Activated naive CD8-positive, alpha-beta T cell treated with anti-CD3 and anti-CD28 coated beads, Interleukin-2, amount 10 ng/mL, durations not matched to agents 7 days and 5 days (primary cell): ENCODE measurements at regions of chr5 and their contacts with region 1.

Region 1: DNA sequence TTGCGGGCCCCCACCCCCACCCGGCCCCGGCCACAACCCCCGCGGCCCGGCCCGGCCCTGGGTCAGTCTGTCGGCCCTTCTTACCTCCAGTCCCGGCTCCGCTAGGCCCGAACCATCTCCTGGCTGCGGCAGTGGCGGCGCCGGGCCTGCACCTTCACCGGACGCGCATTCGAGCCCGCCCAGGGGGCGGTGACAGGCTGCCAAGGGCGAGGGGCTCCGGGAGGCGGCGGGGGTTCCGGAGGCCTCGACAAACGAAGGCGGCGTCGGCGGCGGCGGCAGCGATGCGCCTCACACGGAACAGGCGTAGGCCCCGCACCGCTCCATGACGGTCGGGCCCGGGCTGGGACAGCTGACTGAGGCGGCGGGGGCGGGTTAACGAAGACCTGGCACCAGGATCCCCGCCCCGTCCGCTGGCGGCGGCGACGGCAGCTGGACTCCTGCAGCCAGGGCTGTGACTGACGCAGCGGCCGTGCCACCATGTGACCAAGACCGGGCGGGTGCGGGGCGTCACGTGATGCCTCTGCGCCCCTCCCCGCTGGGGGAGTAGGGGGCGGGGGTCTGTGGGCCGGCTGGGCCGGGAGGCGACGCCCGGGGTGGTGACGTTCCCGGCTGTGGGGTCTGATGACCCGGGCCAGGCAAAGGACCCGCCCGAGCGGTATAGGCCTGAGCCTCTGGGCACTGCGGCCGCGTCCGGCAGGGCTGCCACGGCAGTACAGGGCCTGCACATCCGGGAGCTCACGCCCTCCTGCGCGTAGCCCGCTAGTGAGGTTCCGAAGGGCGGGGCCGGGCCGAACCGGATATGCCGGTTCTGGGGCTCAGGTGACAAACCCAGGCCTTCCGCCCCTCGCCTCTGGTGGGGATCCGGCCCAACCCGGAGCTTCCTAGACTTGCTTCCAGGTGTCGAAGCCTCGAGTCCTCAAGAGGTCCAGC is at the start of gene AFF4:
- DNase-seq: peak; percentile 90
- ATAC-seq: peak; percentile 91
- H3K4me3 Mint-ChIP-seq: peak within 1 kb of the TSS; percentile 97
- H3K27ac Mint-ChIP-seq: peak within 1 kb of the TSS; percentile 96
- H3K4me1 Mint-ChIP-seq: peaks cover 22% of the 10 kb centered on the region
- H3K27me3 Mint-ChIP-seq: no peaks in the 10 kb centered on the region
- total RNA-seq, gene AFF4: 40.3 to 42.1 TPM

Region 2: DNA sequence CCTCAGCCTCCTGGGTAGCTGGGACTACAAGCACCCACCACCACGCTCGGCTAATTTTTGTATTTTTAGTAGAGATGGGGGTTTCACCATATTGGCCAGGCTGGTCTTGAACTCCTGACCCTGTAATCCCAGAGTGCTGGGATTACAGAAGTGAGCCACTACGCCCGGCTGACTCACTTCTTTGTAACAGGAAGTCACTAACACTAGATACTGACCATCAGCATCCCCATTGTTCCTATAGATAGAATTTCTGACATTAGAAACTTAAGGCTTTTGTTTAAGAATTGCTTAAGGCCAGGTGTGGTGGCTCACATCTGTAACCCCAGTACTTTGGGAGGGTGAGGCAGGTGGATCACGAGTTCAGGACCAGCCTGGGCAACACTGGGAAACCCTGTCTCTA is 47.8 kb before region 1 on chr5:
- POLR2A ChIA-PET with region 1: no interaction called
- DNase-seq: no peak
- ATAC-seq: no peak
- H3K4me3 Mint-ChIP-seq: no peak overlapping the region
- H3K27ac Mint-ChIP-seq: no peak overlapping the region
- H3K4me1 Mint-ChIP-seq: no peaks in the 10 kb centered on the region
- H3K27me3 Mint-ChIP-seq: no peaks in the 10 kb centered on the region

Region 3: DNA sequence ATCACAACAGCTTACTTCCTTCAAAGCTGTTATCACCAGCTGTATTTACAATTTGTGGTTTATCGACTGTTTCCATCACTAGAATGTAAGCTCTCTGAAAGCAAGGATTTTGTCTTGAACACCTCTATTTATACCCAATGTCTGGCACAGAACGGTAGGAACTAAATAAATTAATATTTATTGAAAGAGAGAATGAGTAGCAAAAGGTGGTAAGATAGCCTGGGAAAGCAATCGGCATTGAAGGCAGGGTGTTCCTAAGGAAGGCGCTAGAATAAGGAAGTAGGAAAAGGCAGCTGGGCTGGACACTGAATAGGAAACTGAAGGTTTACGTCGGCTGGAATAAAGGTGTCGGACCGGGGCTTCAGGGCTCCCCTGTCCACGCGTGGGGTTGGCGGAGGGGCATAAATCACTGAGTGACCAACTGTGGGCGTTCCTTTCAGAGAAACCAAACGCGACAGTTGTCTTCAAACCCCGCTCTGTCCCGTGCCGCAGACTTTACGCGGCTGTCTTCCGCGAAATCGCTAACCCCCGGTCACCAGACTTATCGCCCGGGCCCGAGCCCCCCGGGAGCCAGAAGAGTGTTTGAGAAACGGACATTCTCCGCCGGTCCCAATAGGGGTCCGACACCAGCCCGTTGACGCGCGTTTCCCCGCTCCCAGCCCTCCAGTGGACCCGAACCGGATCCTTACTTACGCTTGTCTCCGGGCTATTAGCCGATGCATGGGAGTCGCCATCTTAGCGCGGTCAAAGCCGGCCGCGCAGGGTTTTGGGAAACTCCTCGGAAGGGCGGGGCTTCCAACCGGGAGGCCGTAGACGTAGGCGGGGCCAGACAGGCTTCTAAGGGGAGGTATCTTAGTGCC is 62.6 kb after region 1 on chr5 and contains the start of gene ZCCHC10:
- POLR2A ChIA-PET with region 1: interaction called, 10 read pairs
- DNase-seq: peak; percentile 90
- ATAC-seq: peak; percentile 99
- H3K4me3 Mint-ChIP-seq: peak within 1 kb of the TSS; percentile 90
- H3K27ac Mint-ChIP-seq: peak within 1 kb of the TSS; percentile 88
- H3K4me1 Mint-ChIP-seq: peaks cover 14% of the 10 kb centered on the region
- H3K27me3 Mint-ChIP-seq: no peaks in the 10 kb centered on the region
- total RNA-seq, gene ZCCHC10: 22.8 to 24.5 TPM